Ascending aorta (tissue), 2 donors: ENCODE measurements at regions of chr7 and their contacts with region 1.

Region 1: GRCh38 chr7:130921391-130922180 is 187.6 kb upstream of the KLF14 start:
- DNase-seq: peak in 1 of 2 donors; percentile 92
- H3K4me3 ChIP-seq: peak overlapping the region; percentile 31 to 56
- H3K27ac ChIP-seq: peak overlapping the region; percentile 89 to 94
- H3K4me1 ChIP-seq: peaks cover 0 to 50% of the 10 kb centered on the region in 2 donors
- H3K27me3 ChIP-seq: no peaks in the 10 kb centered on the region
- CTCF ChIP-seq: no peak

Region 2: DNA sequence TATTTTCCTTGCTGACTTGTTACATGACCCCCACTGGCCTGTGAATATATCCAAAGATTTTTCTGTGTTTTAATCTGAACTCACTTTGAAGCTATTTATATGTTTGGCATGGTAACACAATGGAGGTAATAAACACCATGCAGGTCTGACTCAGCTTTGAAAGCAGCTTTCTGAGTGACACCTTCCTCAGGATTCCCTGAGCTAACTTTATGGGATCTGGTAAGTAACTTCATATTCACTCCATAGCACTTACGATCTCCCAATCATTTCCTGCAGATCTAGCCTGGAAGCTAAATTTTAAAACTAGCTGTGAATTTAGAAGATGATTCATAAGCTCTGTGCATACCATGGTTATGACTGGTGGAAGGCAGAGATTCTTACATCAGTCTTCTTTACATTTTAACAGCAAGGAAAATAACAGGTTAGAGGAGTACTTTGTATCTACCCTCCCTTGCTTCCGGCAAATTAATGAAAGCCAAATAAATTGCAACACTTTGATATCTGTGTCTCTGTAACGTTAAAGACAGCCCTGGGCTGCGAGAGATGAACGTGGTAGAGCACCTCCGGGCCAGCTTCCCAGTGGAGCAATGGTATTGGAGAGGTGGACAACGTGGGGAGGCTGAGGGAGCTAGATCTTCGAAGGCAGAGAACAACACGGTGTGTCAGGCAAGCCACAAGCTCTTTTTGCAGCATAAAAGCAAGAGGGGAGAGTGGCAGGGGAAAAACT is 17.4 kb before region 1 on chr7:
- intact Hi-C with region 1: loop called (anchors 2 kb)
- DNase-seq: peak in 1 of 2 donors; percentile 63
- H3K4me3 ChIP-seq: no peak overlapping the region
- H3K27ac ChIP-seq: peak overlapping the region; percentile 83 to 90
- H3K4me1 ChIP-seq: peaks cover 6 to 50% of the 10 kb centered on the region in 2 donors
- H3K27me3 ChIP-seq: no peaks in the 10 kb centered on the region
- CTCF ChIP-seq: no peak

Region 3: GRCh38 chr7:130941322-130942210 is 20.0 kb after region 1 on chr7:
- intact Hi-C with region 1: loop called (anchors 2 kb)
- DNase-seq: peak in 1 of 2 donors; percentile 75
- H3K4me3 ChIP-seq: peak overlapping the region; percentile 44 to 60
- H3K27ac ChIP-seq: peak overlapping the region; percentile 69 to 70
- H3K4me1 ChIP-seq: peaks cover 0 to 34% of the 10 kb centered on the region in 2 donors
- H3K27me3 ChIP-seq: no peaks in the 10 kb centered on the region
- CTCF ChIP-seq: no peak